Cardiac septum (tissue), 1 donor: ENCODE measurements at regions of chr3 and their contacts with region 1.

Region 1: GRCh38 chr3:141561426-141562034 is 74.7 kb downstream of the RASA2 start:
- DNase-seq: no peak

Region 2: DNA sequence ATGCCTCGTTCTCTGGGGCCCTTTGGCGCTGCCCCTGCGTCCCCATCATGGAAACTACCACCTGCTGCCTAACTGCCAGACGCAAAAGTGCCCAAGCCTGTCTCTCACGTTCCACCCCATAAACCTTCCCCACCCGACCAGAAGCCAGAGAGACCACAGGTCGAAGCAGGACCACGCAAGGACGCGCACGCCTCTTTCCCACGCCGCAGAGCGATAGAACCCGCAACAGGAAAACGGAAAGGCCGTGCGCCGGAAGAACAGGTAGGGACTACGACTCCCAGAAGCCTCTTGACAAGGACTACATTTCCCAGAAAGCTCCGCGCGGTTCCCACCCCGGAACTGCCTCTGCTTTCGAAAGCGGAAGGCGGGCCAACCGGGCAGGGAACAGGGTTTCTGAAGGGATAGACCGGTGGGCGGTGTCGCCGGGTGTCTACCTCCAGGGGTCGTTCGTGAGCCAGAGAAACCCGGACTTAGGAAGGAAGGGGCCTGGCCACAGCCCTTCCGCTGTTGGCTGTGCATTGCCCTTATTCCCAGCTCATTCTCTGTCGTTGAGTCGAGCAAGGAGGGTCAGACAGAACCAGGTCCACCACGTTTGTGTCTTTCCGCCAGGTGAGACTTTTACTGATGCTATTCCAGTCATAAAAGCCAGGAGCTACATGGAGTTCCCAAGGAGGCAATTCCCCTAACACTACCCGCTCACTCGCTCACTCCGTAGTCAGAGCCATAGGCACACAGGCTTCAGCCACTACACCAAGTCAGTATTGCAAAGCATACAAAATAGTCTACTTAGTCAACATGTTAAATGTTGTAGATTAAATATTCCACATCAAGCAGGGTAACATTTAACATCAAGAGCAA is 249.8 kb before region 1 on chr3:
- intact Hi-C with region 1: loop called (anchors 5 kb)
- DNase-seq: peak; percentile 99

Region 3: DNA sequence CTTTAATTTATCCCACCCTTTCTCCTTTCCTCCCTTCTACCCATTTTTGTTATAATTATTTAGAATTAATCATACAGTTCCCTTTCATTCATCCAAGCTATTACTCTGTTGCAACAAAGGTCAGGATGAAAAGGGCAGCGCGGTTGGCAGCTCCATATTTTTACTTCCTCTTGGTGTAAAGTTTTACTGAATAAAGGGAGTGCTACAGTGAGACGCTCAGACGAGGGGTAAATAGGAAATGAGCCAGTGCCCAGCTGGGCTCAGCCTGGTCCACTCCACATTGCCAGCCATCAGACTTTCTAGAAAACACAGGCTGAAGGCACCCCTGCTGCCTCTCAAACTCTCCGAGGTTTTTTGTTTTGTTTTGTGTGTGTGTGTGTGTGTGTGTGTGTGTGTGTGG is 215.1 kb before region 1 on chr3:
- intact Hi-C with region 1: no loop called
- DNase-seq: no peak

Region 4: DNA sequence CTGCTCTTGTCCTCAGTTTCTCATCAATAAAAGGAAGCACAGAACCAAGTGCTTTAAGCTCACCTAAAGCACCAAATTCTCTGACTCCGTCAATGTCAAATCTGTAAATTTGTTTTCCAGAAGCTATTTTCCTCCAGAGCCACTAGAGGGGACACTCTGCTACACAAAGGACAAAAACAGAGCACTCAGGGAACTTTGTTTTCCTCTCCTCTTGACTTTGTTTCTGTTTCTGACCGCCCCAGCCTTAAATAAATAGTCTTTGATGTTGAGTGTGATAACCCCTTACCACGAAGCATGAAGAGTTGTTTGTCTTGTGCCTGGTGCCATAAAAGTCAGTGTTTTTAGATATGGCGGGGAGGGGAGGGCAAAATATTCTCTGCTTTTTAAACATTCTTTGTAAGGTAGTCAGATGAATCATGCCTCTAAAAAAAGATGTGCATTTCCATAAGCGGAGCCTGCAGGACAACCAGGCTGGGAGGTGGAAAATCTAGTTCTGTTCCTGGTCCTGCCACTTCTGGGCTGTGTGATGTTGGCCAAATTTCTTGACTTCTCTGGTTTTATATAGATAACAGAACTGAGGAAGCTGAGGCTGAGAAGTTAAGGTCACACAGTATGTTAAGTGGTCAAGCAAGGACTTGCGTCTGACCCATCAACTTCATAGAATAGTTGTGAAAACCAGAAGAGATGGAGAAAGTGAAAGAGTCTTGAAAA is 200.5 kb before region 1 on chr3:
- intact Hi-C with region 1: loop called (anchors 10 kb)
- DNase-seq: no peak

Region 5: GRCh38 chr3:141460097-141460704 is 101.3 kb before region 1 on chr3:
- intact Hi-C with region 1: loop called (anchors 2 kb)
- DNase-seq: peak; percentile 92

Region 6: DNA sequence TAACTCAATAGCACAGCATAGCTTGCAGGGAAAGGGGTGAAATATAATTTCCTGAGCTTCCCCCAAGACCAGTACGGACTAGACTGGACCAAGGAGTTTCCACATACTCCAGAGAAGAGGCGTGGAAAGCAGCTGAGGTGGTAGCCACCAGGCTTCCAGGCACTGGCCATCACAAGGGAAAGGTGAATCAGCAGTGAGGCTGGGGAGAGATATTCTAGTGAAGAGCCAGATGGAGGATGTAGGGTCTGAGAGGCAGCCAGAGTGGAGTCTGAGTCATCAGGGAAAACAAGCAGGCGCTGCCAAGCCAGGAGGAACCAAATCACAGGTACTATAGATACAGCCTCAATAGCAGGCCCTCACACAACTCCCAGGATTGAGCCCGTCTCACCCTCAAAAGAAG is 84.3 kb before region 1 on chr3:
- intact Hi-C with region 1: loop called (anchors 2 kb)
- DNase-seq: no peak

Region 7: DNA sequence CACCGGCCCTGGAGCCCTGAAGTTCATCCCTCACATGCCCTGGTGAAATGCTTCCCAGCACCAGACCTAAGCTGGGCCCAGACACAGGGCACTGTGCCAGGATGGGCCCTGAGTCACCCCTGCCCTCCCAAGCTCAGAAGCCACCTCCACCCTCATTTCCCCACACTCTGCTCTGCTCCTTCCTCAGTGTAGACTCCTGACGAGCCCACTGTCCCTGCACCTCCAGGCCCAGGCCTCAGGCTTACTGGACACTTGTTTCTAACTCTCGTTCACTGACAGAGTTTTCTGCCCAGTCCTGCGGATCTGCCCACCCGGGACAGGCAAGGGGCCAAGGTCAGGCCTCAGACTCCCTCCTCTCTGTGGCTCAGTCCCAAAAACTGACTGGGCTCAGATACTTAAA is 64.0 kb after region 1 on chr3:
- intact Hi-C with region 1: no loop called
- DNase-seq: no peak